ENCODE measurements at regions of chr14 and their contacts with region 1.

Region 1: DNA sequence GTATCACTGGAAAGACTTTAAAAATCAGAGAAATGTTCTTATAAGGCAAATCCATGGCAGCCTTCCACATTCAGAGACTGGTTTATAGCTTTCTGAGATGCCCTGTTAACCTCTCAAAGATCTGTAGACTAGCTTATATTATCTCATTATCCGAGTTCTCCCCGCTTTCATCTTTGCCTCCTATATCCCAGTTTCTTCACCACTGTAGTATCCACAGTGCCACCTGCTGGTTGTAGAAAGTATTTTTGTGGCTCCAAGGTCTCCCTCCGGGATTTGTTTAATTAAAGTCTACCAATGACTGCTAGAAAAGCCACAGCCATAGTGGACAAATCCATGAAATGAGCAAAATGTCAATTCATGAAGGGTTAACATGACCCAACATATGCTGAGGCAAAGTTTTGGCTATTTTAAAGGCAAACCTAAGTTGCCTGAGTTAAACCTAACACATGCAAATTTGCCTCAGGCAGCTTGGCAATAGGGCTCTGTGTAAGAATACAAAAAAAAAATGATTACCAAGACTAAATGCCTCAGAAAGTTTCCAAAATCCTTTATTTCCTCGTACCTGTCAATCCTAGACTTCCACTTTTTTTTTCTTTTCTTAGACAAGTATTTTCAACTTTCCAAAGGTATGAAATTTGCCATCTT is 218.8 kb upstream of the BMP4 start:
- DNase-seq: peak; percentile 74
- ATAC-seq: peak; percentile 59
- H3K4me3 Mint-ChIP-seq: no peak overlapping the region
- H3K27ac Mint-ChIP-seq: no peak overlapping the region
- H3K4me1 Mint-ChIP-seq: no peaks in the 10 kb centered on the region
- H3K27me3 Mint-ChIP-seq: no peaks in the 10 kb centered on the region
- CTCF ChIP-seq: peak; percentile 76

Region 2: DNA sequence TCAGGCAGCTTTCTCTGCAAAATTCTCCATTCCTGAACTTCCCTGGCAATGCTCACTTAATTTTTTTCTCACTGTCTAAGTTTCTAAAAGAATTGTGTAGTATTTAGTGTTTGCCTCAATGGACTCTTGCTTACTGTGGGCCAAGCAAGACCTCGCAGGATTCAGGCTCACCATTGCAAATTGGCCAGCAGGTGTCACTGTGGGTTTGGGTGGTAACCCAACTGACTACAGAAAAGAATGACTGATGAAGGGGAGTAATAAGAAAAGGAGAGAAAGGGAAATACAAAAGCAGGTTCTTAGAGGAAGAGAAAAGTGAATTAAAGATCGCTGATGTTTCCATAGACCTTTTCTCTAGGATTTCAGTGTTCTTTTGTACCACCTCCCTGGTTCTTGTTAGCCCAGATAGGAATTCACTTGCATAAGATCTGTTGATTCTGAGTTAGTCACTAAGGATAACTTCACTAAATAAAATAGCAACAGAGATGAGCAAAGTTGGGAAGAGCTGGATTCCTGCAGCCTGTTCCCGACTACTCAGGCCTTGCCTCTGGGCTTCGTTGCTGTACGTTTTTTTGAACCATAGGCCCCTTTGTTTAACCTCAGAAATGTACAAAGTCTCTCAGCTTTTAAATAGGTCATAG is 635.8 kb before region 1 on chr14:
- CTCF ChIA-PET with region 1: interaction called, 12 read pairs
- POLR2A ChIA-PET with region 1: no interaction called
- DNase-seq: peak; percentile 90
- ATAC-seq: peak; percentile 97
- H3K4me3 Mint-ChIP-seq: no peak overlapping the region
- H3K27ac Mint-ChIP-seq: no peak overlapping the region
- H3K4me1 Mint-ChIP-seq: peaks cover 8% of the 10 kb centered on the region; the same call in 1 of the 2 replicates
- H3K27me3 Mint-ChIP-seq: no peaks in the 10 kb centered on the region
- CTCF ChIP-seq: peak; percentile 52; the same call in 1 of the 2 replicates

Region 3: GRCh38 chr14:53953002-53953827 is 222.2 kb before region 1 on chr14:
- CTCF ChIA-PET with region 1: interaction called, 27 read pairs
- POLR2A ChIA-PET with region 1: interaction called, 3 read pairs
- DNase-seq: peak; percentile 81
- ATAC-seq: peak; percentile 33
- H3K4me3 Mint-ChIP-seq: peak overlapping the region; percentile 97
- H3K27ac Mint-ChIP-seq: peak overlapping the region; percentile 94
- H3K4me1 Mint-ChIP-seq: peaks cover 53% of the 10 kb centered on the region
- H3K27me3 Mint-ChIP-seq: peaks cover 85% of the 10 kb centered on the region
- CTCF ChIP-seq: no peak

Region 4: DNA sequence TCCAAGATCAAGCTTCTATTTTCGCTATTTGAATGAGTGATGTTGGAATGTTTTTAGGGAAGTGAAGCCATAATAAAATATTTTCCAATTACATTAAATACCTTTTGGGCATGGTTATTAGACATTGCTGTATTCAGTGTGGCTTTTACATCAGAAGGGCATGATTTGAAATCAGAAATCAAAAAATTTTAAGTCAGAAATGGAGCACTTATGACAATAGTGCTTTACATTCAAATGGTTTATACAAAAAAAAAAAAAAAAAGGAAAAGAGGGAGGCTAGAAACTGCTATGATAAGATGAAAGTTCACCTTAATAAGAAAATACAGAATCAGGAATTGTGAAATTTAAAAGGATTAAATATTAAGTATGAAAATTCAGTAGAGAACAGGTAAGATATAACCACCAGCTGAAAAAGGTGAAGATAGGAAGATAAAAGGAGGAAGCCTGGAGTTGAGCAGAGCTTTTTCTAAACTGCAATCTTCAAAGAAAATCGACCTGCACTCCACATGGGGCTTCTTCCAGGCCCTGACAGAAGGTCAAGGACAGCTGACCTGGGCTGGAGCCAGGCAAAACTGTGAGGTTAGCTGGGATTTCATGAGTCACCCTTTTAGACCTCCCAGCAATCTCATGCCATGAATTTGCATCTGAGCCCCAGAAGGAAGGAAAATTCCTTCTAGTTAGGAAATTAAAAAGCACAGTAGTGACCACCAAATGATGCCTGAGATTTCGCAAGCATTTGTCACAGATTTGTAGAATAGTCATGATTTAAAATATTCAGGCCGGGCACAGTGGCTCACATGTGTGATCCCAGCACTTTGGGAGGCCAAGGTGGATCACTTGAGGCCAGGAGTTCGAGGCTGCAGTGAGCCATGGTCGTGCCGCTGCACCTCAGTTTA is 195.4 kb before region 1 on chr14:
- CTCF ChIA-PET with region 1: interaction called, 11 read pairs
- POLR2A ChIA-PET with region 1: no interaction called
- DNase-seq: peak; percentile 47
- ATAC-seq: peak; percentile 46
- H3K4me3 Mint-ChIP-seq: no peak overlapping the region; the same call in 1 of the 2 replicates
- H3K27ac Mint-ChIP-seq: peak overlapping the region; percentile 34; the same call in 1 of the 2 replicates
- H3K4me1 Mint-ChIP-seq: peaks cover 66% of the 10 kb centered on the region
- H3K27me3 Mint-ChIP-seq: peaks cover 40% of the 10 kb centered on the region
- CTCF ChIP-seq: no peak

Region 5: GRCh38 chr14:54186821-54187763 is 11.7 kb after region 1 on chr14:
- CTCF ChIA-PET with region 1: interaction called, 20 read pairs
- POLR2A ChIA-PET with region 1: no interaction called
- DNase-seq: no peak
- ATAC-seq: peak; percentile 47; the same call in 1 of the 2 replicates
- H3K4me3 Mint-ChIP-seq: no peak overlapping the region
- H3K27ac Mint-ChIP-seq: no peak overlapping the region
- H3K4me1 Mint-ChIP-seq: peaks cover 16% of the 10 kb centered on the region
- H3K27me3 Mint-ChIP-seq: peaks cover 9% of the 10 kb centered on the region
- CTCF ChIP-seq: no peak

Region 6: GRCh38 chr14:54338696-54339317 is 163.4 kb after region 1 on chr14:
- CTCF ChIA-PET with region 1: interaction called, 10 read pairs
- POLR2A ChIA-PET with region 1: no interaction called
- DNase-seq: no peak
- ATAC-seq: peak; percentile 84
- H3K4me3 Mint-ChIP-seq: no peak overlapping the region
- H3K27ac Mint-ChIP-seq: no peak overlapping the region
- H3K4me1 Mint-ChIP-seq: peaks cover 43% of the 10 kb centered on the region
- H3K27me3 Mint-ChIP-seq: no peaks in the 10 kb centered on the region
- CTCF ChIP-seq: no peak

Measured in WTC11 (cell line).